ENCODE measurements at regions of chr4 and their contacts with region 1.

Region 1: DNA sequence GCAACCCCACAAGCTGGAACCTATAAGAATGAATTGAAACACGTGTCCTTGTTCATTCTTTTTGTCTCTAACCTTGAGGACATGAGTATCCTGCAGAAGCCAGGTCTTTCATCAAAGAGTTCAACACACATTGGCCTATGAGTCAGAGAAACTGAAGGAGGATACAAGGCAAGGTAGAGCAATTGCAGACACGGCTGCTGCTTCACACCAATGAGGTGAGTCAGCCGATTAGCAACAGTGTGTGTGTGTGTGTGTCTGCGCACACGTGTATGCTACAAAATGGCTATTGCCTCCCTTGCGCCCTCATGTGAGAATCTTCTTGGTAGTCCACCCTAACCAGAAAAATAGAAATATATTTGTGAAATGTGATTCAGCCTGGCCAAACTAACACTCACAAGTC is 1477.7 kb upstream of the IGFBP7 start:
- DNase-seq: no peak
- H3K4me3 ChIP-seq: no peak overlapping the region
- H3K27ac ChIP-seq: no peak overlapping the region
- H3K27me3 ChIP-seq: peaks cover 0 to 8% (median 0%) of the 10 kb centered on the region in 45 donors
- CTCF ChIP-seq: no peak

Region 2: GRCh38 chr4:58611012-58611411 is 23.2 kb after region 1 on chr4:
- intact Hi-C with region 1: loop called in 1 of 2 experiments (anchors 1 kb)
- DNase-seq: no peak
- H3K4me3 ChIP-seq: no peak overlapping the region
- H3K27ac ChIP-seq: no peak overlapping the region
- H3K27me3 ChIP-seq: no peaks in the 10 kb centered on the region
- CTCF ChIP-seq: no peak